ENCODE measurements at regions of chr14 and their contacts with region 1.

Region 1: DNA sequence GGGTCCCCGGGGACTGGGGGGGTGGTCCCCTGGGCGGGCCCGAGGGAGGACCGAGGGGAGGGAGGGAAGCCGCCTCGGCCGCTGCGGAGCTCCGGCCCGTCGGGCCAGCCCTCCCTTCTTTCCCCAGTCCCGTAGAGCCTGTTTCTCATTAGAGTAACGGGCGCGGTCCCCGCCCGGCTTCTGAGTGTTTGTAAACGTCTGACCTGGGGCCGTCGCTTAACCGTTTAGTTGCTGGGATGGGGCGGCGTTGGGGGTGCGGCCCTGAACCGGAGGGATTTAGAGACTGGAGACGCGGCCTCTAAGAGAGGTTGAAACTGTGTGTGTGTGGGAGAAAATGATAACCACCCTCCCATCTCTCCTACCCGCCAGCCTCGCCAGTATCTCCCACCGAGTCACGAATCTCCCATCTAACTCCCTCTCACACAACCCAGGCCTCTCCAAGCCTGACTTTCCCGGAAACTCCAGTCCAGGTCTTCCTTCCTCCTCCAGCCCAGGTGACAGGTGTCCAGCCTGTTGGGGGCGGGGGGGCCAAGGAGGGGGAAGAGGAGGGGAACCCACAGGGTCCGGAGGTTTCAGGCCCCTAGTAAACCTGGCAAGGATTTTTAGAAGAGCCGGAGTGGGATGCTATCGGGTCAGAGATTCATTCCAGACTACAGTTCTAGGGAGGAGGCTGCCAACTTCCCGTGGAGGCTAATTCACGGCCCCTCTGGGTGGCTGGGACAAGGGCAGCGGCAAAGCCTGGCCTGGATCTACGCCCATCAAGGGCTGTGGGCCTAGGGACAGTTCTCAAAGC is 1.1 kb upstream of the NFATC4 start:
- DNase-seq: peak; percentile 90

Region 2: DNA sequence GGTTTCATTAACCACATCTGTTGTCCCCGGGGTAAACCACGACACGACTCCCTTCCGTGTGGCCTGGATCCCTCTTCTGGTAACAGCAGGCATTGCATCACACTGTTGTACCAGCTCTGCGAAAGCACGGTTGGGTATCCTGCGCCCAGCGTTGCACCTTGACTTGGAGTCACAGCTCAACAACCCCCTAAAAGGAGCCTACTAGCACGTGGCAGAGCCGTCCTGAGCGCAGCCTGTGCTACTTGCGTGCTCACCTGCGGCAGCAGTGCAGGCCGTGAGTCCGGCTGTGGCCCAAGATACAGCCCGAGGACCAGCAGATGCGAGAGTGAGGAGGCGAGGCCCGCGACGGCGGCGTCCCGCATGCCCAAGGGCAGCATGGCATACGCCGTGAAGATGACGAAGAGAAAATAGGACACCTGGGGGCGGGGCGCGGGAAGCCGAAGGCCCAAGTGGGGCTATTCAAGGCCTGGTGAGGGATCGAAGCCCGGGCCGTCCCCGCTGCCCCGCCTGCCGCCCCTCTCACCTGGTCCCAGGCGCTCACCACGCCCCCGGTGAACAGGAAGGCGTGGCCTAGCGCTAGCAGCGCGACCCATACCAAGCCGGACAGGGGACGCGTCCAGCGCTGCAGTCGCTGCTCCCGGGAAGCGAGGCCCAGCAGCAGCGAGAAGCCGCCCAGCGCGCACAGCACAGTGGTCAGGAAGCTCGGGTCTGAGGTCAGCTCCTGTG is 34.5 kb before region 1 on chr14:
- intact Hi-C with region 1: loop called (anchors 2 kb)
- DNase-seq: no peak

Region 3: GRCh38 chr14:24398653-24399446 is 31.9 kb after region 1 on chr14 and contains the start of gene NYNRIN:
- intact Hi-C with region 1: loop called (anchors 2 kb)
- DNase-seq: no peak
- total RNA-seq, gene NYNRIN: 5.0 TPM

Measured in cardiac septum (tissue), 1 donor.